Dendritic cell treated with granulocyte-macrophage colony-stimulating factor and Interleukin-4, amounts not matched to agents 40 ng/mL and 50 ng/mL, for 4 days (primary cell): ENCODE measurements at regions of chr17 and their contacts with region 1.

Region 1: GRCh38 chr17:34420254-34420766 is 57.3 kb upstream of the CCL1 start:
- H3K4me3 Mint-ChIP-seq: no peak overlapping the region
- H3K27ac Mint-ChIP-seq: no peak overlapping the region
- H3K4me1 Mint-ChIP-seq: peaks cover 10% of the 10 kb centered on the region
- H3K27me3 Mint-ChIP-seq: peaks cover 50% of the 10 kb centered on the region

Region 2: DNA sequence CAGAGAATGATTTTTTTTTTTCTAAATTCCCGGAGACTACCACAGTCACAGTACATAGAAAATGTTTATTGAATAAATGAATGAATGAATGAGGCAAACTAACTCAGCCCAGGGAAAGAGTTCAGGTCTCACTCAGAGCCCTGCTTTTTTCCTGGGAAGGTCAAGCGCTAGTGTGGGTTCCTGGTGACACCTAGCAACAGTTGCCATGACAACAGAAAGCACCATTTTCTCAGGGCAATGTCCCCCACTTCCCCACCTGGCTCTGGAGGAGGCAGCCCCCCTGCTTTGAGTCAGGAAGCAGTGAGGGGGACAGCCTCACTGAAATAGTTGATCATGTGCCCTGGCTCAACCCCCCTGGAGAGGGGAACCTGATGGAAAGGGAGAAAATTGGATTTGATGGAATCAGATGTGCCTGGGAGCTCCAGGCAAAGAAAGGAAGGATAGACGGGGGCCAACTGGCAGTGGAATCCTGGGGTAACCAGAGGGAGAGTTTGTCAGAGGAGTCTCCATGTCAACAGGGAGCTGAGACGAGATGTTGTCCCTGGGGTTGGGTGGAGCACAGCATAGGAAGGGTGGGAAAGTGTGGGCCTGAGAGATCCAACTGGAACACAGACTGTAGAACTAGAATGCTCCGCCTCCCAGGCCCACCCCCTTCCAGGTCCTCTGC is 407.5 kb before region 1 on chr17:
- intact Hi-C with region 1: no loop called
- H3K4me3 Mint-ChIP-seq: no peak overlapping the region
- H3K27ac Mint-ChIP-seq: no peak overlapping the region
- H3K4me1 Mint-ChIP-seq: no peaks in the 10 kb centered on the region
- H3K27me3 Mint-ChIP-seq: no peaks in the 10 kb centered on the region

Region 3: DNA sequence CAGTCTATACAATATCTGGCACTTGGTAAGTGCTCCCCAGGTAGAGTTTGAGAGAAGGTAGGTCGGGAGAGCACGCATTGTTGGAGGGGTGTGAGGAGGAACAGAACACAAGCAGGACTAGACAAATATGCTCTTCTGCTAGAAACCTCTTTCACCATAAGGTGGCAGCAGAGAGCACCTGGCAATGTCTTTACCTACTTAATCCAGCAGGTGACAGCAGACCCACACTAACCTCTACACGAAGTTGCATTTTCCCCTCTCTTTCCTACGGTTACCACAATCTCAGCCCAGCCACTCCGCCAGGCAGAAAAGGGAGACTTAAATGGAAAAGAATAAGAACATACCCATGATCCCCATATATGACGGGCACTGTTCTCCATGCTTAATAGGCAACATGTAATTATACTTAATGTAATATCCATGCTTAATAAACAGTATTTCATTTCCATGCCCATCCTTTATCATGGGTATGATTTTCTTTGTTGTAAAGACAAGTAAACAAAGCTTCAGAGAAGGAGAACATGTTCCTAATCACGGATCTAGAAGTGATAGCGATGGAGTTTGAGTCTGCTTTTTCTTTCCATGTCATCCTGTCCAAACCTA is 220.3 kb before region 1 on chr17:
- intact Hi-C with region 1: loop called (anchors 2 kb)
- H3K4me3 Mint-ChIP-seq: no peak overlapping the region
- H3K27ac Mint-ChIP-seq: no peak overlapping the region
- H3K4me1 Mint-ChIP-seq: peaks cover 56% of the 10 kb centered on the region
- H3K27me3 Mint-ChIP-seq: peaks cover 42% of the 10 kb centered on the region

Region 4: DNA sequence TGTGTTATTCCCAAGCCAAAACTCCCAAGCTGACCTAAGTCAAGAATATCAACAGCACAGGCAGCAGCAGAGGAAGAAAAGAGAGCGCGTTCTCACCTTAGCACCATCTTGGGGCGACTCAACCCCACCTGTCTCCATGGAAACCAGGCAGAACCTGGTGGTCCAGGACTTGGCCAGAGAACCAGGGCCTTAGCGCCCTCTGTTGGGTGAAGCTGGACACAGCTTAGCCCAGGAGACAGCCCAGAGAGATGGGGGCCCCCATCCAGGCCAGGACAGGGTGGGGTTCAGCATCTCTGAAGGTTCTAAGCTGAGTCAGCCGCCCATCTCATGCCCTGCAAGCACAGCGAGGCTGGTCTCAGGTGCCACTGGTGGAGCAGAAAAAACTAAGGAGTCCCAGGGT is 99.0 kb after region 1 on chr17:
- intact Hi-C with region 1: loop called (anchors 1 kb)
- H3K4me3 Mint-ChIP-seq: no peak overlapping the region
- H3K27ac Mint-ChIP-seq: no peak overlapping the region
- H3K4me1 Mint-ChIP-seq: no peaks in the 10 kb centered on the region
- H3K27me3 Mint-ChIP-seq: peaks cover 6% of the 10 kb centered on the region

Region 5: GRCh38 chr17:34637548-34638525 is 217.5 kb after region 1 on chr17:
- intact Hi-C with region 1: loop called (anchors 1 kb)
- H3K4me3 Mint-ChIP-seq: peak overlapping the region; percentile 32
- H3K27ac Mint-ChIP-seq: no peak overlapping the region
- H3K4me1 Mint-ChIP-seq: no peaks in the 10 kb centered on the region
- H3K27me3 Mint-ChIP-seq: peaks cover 64% of the 10 kb centered on the region

Region 6: GRCh38 chr17:34980681-34981537 is 560.6 kb after region 1 on chr17:
- intact Hi-C with region 1: loop called (anchors 10 kb)
- H3K4me3 Mint-ChIP-seq: peak overlapping the region; percentile 93
- H3K27ac Mint-ChIP-seq: peak overlapping the region; percentile 97
- H3K4me1 Mint-ChIP-seq: peaks cover 35% of the 10 kb centered on the region
- H3K27me3 Mint-ChIP-seq: no peaks in the 10 kb centered on the region

Region 7: GRCh38 chr17:35119368-35120165 is 699.3 kb after region 1 on chr17 and contains the start of gene RAD51D:
- intact Hi-C with region 1: loop called (anchors 2 kb)
- H3K4me3 Mint-ChIP-seq: peak within 1 kb of the TSS; percentile 85
- H3K27ac Mint-ChIP-seq: peak within 1 kb of the TSS; percentile 86
- H3K4me1 Mint-ChIP-seq: peaks cover 26% of the 10 kb centered on the region
- H3K27me3 Mint-ChIP-seq: peaks cover 4% of the 10 kb centered on the region